CD8-positive, alpha-beta T cell (primary cell): ENCODE measurements at regions of chr10 and their contacts with region 1.

Region 1: GRCh38 chr10:22615819-22616499 is 98.4 kb downstream of the PIP4K2A start:
- DNase-seq: peak in 5 of 9 experiments; percentile 38 to 85 (median 59)
- ATAC-seq: peak; percentile 20
- H3K4me3 ChIP-seq: peak overlapping the region in 1 of 2 experiments; percentile 15
- H3K4me3 Mint-ChIP-seq: peak overlapping the region; percentile 71
- H3K27ac ChIP-seq: peak overlapping the region; percentile 15 to 90
- H3K27ac Mint-ChIP-seq: peak overlapping the region; percentile 92
- H3K4me1 ChIP-seq: peaks cover 91% of the 10 kb centered on the region
- H3K4me1 Mint-ChIP-seq: peaks cover 98% of the 10 kb centered on the region
- H3K27me3 ChIP-seq: no peaks in the 10 kb centered on the region
- H3K27me3 Mint-ChIP-seq: no peaks in the 10 kb centered on the region
- CTCF ChIP-seq: no peak

Region 2: GRCh38 chr10:22427890-22428571 is 187.9 kb before region 1 on chr10:
- CTCF ChIA-PET with region 1: no interaction called
- POLR2A ChIA-PET with region 1: no interaction called
- intact Hi-C with region 1: no loop called
- DNase-seq: no peak
- ATAC-seq: no peak
- H3K4me3 ChIP-seq: no peak overlapping the region
- H3K4me3 Mint-ChIP-seq: no peak overlapping the region
- H3K27ac ChIP-seq: no peak overlapping the region
- H3K27ac Mint-ChIP-seq: no peak overlapping the region
- H3K4me1 ChIP-seq: no peaks in the 10 kb centered on the region
- H3K4me1 Mint-ChIP-seq: no peaks in the 10 kb centered on the region
- H3K27me3 ChIP-seq: no peaks in the 10 kb centered on the region
- H3K27me3 Mint-ChIP-seq: peaks cover 12% of the 10 kb centered on the region
- CTCF ChIP-seq: no peak

Region 3: DNA sequence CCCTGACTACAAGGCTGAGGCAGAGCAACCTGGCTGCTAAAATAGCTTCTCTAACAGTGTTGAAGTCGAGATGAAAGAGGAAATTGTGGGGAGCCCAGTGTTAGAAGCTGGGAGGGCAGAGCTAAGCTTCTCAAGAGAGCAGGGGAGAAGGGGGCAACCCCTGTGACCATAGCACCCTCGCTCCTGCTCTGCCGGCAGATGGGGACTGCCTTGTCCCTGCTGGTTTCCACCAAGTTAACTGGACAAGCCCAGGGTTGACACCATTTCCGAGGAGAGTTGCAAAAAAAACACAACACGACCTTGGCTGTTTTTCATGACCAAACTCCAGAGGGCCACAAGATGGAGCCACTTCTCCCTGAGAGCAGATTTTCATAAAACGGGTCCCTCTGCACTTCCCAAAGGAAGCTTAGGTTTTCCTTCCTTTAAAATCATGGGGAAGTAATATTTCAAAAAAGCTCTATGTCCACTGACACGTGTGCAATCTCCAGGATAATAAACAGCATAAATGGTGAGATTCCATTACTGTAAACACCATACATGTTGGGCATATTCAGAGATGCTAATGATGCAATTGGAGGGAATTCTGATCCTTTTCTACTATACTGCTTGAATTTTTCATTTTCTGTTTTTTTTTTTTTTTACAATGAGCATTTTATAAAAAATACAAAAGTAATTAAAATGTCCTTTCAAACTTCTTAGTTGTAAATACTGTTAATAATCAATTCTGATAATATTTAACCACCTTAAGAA is 42.0 kb before region 1 on chr10:
- CTCF ChIA-PET with region 1: interaction called, 8 read pairs
- POLR2A ChIA-PET with region 1: no interaction called
- intact Hi-C with region 1: loop called in 1 of 2 experiments (anchors 2 kb)
- DNase-seq: peak in 7 of 9 experiments; percentile 2 to 82 (median 43)
- ATAC-seq: peak; percentile 64
- H3K4me3 ChIP-seq: no peak overlapping the region
- H3K4me3 Mint-ChIP-seq: peak overlapping the region; percentile 71
- H3K27ac ChIP-seq: peak overlapping the region in 1 of 2 experiments; percentile 63
- H3K27ac Mint-ChIP-seq: peak overlapping the region; percentile 94
- H3K4me1 ChIP-seq: peaks cover 35% of the 10 kb centered on the region
- H3K4me1 Mint-ChIP-seq: peaks cover 73% of the 10 kb centered on the region
- H3K27me3 ChIP-seq: no peaks in the 10 kb centered on the region
- H3K27me3 Mint-ChIP-seq: no peaks in the 10 kb centered on the region
- CTCF ChIP-seq: peak; percentile 79

Region 4: DNA sequence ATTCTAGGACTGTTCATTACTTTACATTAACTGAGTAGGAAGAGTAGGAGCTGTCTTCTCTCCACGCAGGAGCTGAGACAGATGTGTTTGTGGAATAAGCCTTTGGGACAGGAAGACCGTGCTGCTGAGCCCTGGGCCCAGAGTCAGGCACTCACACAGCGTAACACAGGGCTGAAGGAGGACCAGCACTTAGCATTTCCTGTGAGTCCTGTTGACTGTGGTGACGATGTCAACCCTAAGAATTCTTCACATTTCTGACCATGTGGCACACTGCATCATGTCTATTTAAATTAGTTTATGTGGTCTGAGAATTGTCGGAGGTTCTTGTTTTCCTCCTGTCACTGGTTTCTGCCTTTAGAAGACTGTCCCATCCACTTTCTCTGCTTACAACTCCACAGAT is 18.8 kb before region 1 on chr10:
- CTCF ChIA-PET with region 1: interaction called, 25 read pairs
- POLR2A ChIA-PET with region 1: interaction called, 24 read pairs
- intact Hi-C with region 1: loop called in 1 of 2 experiments (anchors 2 kb)
- DNase-seq: peak in 4 of 9 experiments; percentile 34 to 89 (median 60)
- ATAC-seq: peak; percentile 78
- H3K4me3 ChIP-seq: no peak overlapping the region
- H3K4me3 Mint-ChIP-seq: peak overlapping the region; percentile 47
- H3K27ac ChIP-seq: peak overlapping the region; percentile 14 to 90
- H3K27ac Mint-ChIP-seq: peak overlapping the region; percentile 88
- H3K4me1 ChIP-seq: peaks cover 91% of the 10 kb centered on the region
- H3K4me1 Mint-ChIP-seq: peaks cover 93% of the 10 kb centered on the region
- H3K27me3 ChIP-seq: no peaks in the 10 kb centered on the region
- H3K27me3 Mint-ChIP-seq: no peaks in the 10 kb centered on the region
- CTCF ChIP-seq: no peak

Region 5: DNA sequence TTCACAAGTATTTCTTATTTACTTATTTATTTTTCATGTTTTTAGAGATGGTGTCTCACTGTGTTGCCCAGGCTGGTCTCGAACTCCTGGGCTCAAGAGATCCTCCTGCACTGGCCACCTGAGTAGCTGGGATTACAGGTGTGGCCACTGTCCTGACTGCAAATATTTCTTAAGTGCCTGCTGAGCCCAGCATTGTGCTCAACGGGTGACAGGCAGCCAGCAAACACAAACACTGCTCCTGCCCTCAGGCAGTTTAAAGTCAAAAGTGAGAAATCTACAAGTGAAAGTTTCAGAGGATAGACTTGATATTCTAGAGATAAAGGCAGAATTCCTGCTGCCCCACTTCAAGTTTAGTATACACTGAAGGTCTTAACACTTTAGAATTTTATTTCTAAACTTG is 13.3 kb before region 1 on chr10:
- CTCF ChIA-PET with region 1: interaction called, 25 read pairs
- POLR2A ChIA-PET with region 1: interaction called, 24 read pairs
- intact Hi-C with region 1: loop called in 1 of 2 experiments (anchors 1 kb)
- DNase-seq: no peak
- ATAC-seq: no peak
- H3K4me3 ChIP-seq: no peak overlapping the region
- H3K4me3 Mint-ChIP-seq: no peak overlapping the region
- H3K27ac ChIP-seq: peak overlapping the region in 1 of 2 experiments; percentile 90
- H3K27ac Mint-ChIP-seq: peak overlapping the region; percentile 88
- H3K4me1 ChIP-seq: peaks cover 88% of the 10 kb centered on the region
- H3K4me1 Mint-ChIP-seq: peaks cover 92% of the 10 kb centered on the region
- H3K27me3 ChIP-seq: no peaks in the 10 kb centered on the region
- H3K27me3 Mint-ChIP-seq: no peaks in the 10 kb centered on the region
- CTCF ChIP-seq: no peak

Region 6: GRCh38 chr10:22630234-22631174 is 14.5 kb after region 1 on chr10:
- CTCF ChIA-PET with region 1: interaction called, 12 read pairs
- POLR2A ChIA-PET with region 1: interaction called, 64 read pairs
- intact Hi-C with region 1: loop called (anchors 1 kb)
- DNase-seq: peak in 4 of 9 experiments; percentile 39 to 91 (median 68)
- ATAC-seq: peak; percentile 79
- H3K4me3 ChIP-seq: peak overlapping the region; percentile 16 to 21
- H3K4me3 Mint-ChIP-seq: peak overlapping the region; percentile 72
- H3K27ac ChIP-seq: peak overlapping the region; percentile 16 to 81
- H3K27ac Mint-ChIP-seq: peak overlapping the region; percentile 97
- H3K4me1 ChIP-seq: peaks cover 96% of the 10 kb centered on the region
- H3K4me1 Mint-ChIP-seq: peaks cover 96% of the 10 kb centered on the region
- H3K27me3 ChIP-seq: no peaks in the 10 kb centered on the region
- H3K27me3 Mint-ChIP-seq: no peaks in the 10 kb centered on the region
- CTCF ChIP-seq: no peak

Region 7: GRCh38 chr10:22682237-22683139 is 66.5 kb after region 1 on chr10:
- CTCF ChIA-PET with region 1: interaction called, 4 read pairs
- POLR2A ChIA-PET with region 1: interaction called, 6 read pairs
- intact Hi-C with region 1: loop called (anchors 2 kb)
- DNase-seq: peak; percentile 31 to 89 (median 71)
- ATAC-seq: peak; percentile 51
- H3K4me3 ChIP-seq: peak overlapping the region; percentile 4 to 34
- H3K4me3 Mint-ChIP-seq: peak overlapping the region; percentile 68
- H3K27ac ChIP-seq: peak overlapping the region; percentile 75 to 85
- H3K27ac Mint-ChIP-seq: peak overlapping the region; percentile 98
- H3K4me1 ChIP-seq: peaks cover 97% of the 10 kb centered on the region
- H3K4me1 Mint-ChIP-seq: peaks cover 94% of the 10 kb centered on the region
- H3K27me3 ChIP-seq: no peaks in the 10 kb centered on the region
- H3K27me3 Mint-ChIP-seq: no peaks in the 10 kb centered on the region
- CTCF ChIP-seq: no peak

Region 8: GRCh38 chr10:22714479-22715289 is 98.7 kb after region 1 on chr10 and contains the start of gene PIP4K2A:
- CTCF ChIA-PET with region 1: interaction called, 4 read pairs
- POLR2A ChIA-PET with region 1: interaction called, 11 read pairs
- intact Hi-C with region 1: loop called (anchors 1 to 2 kb)
- DNase-seq: peak; percentile 43 to 92 (median 75)
- ATAC-seq: peak; percentile 76
- H3K4me3 ChIP-seq: peak within 1 kb of the TSS; percentile 72 to 95
- H3K4me3 Mint-ChIP-seq: peak within 1 kb of the TSS; percentile 94
- H3K27ac ChIP-seq: peak within 1 kb of the TSS; percentile 78 to 81
- H3K27ac Mint-ChIP-seq: peak within 1 kb of the TSS; percentile 92
- H3K4me1 ChIP-seq: peaks cover 25% of the 10 kb centered on the region
- H3K4me1 Mint-ChIP-seq: peaks cover 30% of the 10 kb centered on the region
- H3K27me3 ChIP-seq: no peaks in the 10 kb centered on the region
- H3K27me3 Mint-ChIP-seq: no peaks in the 10 kb centered on the region
- CTCF ChIP-seq: no peak
- total RNA-seq, gene PIP4K2A: 82.5 to 89.5 TPM